Sciatic nerve (tissue), 2 donors: ENCODE measurements at regions of chr19 and their contacts with region 1.

Region 1: GRCh38 chr19:54418030-54418929 is 3.0 kb downstream of the TTYH1 start:
- DNase-seq: no peak
- ATAC-seq: no peak

Region 2: GRCh38 chr19:53621885-53622740 is 796.2 kb before region 1 on chr19:
- intact Hi-C with region 1: no loop called
- DNase-seq: no peak
- ATAC-seq: no peak

Region 3: DNA sequence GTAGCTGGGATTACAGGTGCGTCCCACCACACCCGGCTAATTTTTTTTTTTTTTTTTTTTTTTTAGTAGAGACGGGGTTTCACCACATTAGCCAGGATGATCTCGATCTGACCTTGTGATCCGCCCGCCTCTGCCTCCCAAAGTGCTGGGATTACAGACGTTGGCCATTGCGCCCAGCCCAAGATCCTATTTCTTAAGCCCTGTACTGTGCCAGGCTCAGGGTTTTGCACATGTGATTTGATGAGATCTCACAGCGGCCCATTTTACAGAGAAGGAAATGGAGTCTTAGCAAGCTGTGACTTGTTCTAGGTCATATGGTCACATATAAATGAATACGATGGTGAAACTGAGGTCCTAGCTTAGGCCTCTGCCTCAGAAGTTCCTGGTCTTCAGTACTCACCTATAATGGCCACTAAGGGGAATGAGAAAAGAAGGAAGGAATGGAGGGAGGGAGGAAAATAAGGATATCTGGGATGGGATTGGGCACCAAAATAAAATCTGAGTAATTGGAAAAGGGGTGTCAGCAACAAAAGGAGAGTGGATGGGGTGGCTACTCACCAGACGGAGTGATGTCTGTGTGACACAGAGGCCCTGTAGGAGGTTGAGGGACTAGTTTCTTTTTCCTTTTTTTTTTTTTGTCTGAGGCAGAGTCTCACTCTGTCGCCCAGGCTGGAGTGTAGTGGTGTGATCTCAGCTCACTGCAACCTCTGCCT is 318.9 kb before region 1 on chr19:
- intact Hi-C with region 1: loop called (anchors 2 kb)
- DNase-seq: no peak
- ATAC-seq: no peak

Region 4: GRCh38 chr19:54399189-54399588 is 19.1 kb before region 1 on chr19:
- intact Hi-C with region 1: no loop called
- DNase-seq: no peak
- ATAC-seq: no peak

Region 5: GRCh38 chr19:54454781-54455675 is 36.7 kb after region 1 on chr19:
- intact Hi-C with region 1: loop called (anchors 1 kb)
- DNase-seq: no peak
- ATAC-seq: no peak